Natural killer cell (primary cell): ENCODE measurements at regions of chr7 and their contacts with region 1.

Region 1: DNA sequence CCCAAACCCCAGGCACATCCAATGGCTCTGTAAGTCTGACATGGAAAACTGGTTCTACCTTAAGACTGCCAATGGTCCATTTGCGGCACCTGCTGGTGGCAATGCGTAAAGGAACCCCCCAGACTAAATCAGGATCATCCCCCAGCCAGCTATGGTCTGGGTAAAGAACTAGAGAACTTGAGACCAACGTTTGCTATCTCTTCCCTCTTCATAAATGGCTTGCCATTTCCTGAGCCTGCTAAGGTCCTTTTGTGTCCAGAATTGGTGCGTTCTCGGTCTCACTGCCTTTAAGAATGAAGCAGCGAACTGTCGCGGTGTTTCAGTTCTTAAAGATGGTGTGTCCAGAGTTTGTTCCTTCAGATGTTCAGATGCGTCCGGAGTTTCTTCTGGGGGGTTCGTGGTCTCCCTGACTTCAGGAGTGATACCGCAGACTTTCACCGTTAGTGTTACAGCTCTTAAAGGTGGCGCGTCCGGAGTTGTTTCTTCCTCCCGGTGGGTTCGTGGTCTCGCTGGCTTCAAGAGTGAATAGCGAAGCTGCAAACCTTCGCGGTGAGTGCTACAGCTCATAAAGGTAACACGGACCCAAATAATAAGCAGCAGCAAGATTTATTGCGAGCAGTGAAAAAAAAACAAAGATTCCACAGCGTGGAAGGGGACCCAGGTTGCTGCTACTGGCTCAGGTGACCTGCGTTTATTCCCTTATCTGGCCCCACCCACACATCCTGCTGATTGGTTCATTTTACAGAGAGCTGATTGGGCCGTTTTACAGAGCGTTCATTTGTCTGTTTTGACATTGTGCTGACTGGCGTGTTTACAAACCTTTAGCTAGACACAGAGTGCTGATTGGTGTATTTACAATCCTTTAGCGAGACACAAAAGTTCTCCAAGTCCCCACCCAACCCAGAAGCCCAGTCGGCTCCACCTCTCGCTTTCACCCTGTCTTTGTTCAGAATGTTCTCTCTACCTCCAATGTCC is 95.4 kb downstream of the ELMO1 start:
- DNase-seq: peak; percentile 41 to 88
- ATAC-seq: peak; percentile 80 to 83 (median 80)
- H3K4me3 ChIP-seq: peak overlapping the region; percentile 53
- H3K4me3 Mint-ChIP-seq: peak overlapping the region; percentile 89
- H3K27ac ChIP-seq: peak overlapping the region; percentile 47
- H3K27ac Mint-ChIP-seq: peak overlapping the region; percentile 58 to 80
- H3K4me1 ChIP-seq: peaks cover 27% of the 10 kb centered on the region
- H3K4me1 Mint-ChIP-seq: peaks cover 59 to 78% of the 10 kb centered on the region in 2 donors
- H3K27me3 ChIP-seq: no peaks in the 10 kb centered on the region
- H3K27me3 Mint-ChIP-seq: peaks cover 17 to 46% of the 10 kb centered on the region in 2 donors
- CTCF ChIP-seq: peak; percentile 65

Region 2: GRCh38 chr7:37208528-37208927 is 144.7 kb before region 1 on chr7:
- intact Hi-C with region 1: loop called (anchors 2 kb)
- DNase-seq: peak in 1 of 2 donors; percentile 59
- ATAC-seq: peak; percentile 57 to 77 (median 59)
- H3K4me3 ChIP-seq: no peak overlapping the region
- H3K4me3 Mint-ChIP-seq: no peak overlapping the region
- H3K27ac ChIP-seq: no peak overlapping the region
- H3K27ac Mint-ChIP-seq: peak overlapping the region; percentile 33 to 46
- H3K4me1 ChIP-seq: no peaks in the 10 kb centered on the region
- H3K4me1 Mint-ChIP-seq: peaks cover 5 to 8% of the 10 kb centered on the region in 2 donors
- H3K27me3 ChIP-seq: no peaks in the 10 kb centered on the region
- H3K27me3 Mint-ChIP-seq: no peaks in the 10 kb centered on the region
- CTCF ChIP-seq: peak; percentile 52

Region 3: DNA sequence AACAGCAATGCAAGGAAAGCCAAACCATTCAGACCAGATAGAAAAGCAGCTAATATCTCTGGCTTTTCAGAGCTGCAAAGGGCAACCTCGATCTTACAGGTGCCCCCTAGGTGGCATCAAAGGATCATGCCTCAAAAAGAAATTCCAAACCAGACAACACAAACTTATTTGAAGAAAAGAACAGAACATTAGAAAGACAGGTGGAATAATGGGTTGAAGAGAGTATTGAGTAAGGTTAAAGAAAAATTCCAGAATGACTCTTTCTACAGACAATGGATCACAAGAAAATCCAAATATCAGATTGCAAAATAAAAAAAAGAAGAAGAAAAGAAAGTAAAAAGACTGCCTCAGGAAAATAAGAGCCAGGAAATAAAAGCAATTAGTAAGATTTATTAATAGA is 118.3 kb before region 1 on chr7:
- intact Hi-C with region 1: loop called (anchors 10 kb)
- DNase-seq: peak in 1 of 2 donors; percentile 64
- ATAC-seq: no peak
- H3K4me3 ChIP-seq: no peak overlapping the region
- H3K4me3 Mint-ChIP-seq: no peak overlapping the region
- H3K27ac ChIP-seq: no peak overlapping the region
- H3K27ac Mint-ChIP-seq: no peak overlapping the region
- H3K4me1 ChIP-seq: no peaks in the 10 kb centered on the region
- H3K4me1 Mint-ChIP-seq: peaks cover 5 to 10% of the 10 kb centered on the region in 2 donors
- H3K27me3 ChIP-seq: no peaks in the 10 kb centered on the region
- H3K27me3 Mint-ChIP-seq: no peaks in the 10 kb centered on the region
- CTCF ChIP-seq: peak; percentile 53

Region 4: GRCh38 chr7:37448636-37449361 is 95.5 kb after region 1 on chr7 and contains the start of gene ELMO1:
- intact Hi-C with region 1: loop called (anchors 5 kb)
- DNase-seq: peak; percentile 72 to 90
- ATAC-seq: peak; percentile 73 to 87 (median 82)
- H3K4me3 ChIP-seq: peak within 1 kb of the TSS; percentile 97
- H3K4me3 Mint-ChIP-seq: peak within 1 kb of the TSS; percentile 100
- H3K27ac ChIP-seq: peak within 1 kb of the TSS; percentile 85
- H3K27ac Mint-ChIP-seq: peak within 1 kb of the TSS; percentile 95 to 100
- H3K4me1 ChIP-seq: peaks cover 22% of the 10 kb centered on the region
- H3K4me1 Mint-ChIP-seq: peaks cover 65 to 70% of the 10 kb centered on the region in 2 donors
- H3K27me3 ChIP-seq: no peaks in the 10 kb centered on the region
- H3K27me3 Mint-ChIP-seq: peaks cover 7 to 10% of the 10 kb centered on the region in 2 donors
- CTCF ChIP-seq: peak; percentile 55
- total RNA-seq, gene ELMO1: 127 to 147 (median 130) TPM

Region 5: GRCh38 chr7:37495574-37496184 is 142.4 kb after region 1 on chr7:
- intact Hi-C with region 1: loop called (anchors 10 kb)
- DNase-seq: peak in 1 of 2 donors; percentile 60
- ATAC-seq: peak in 2 of 3 donors; percentile 40 to 51
- H3K4me3 ChIP-seq: no peak overlapping the region
- H3K4me3 Mint-ChIP-seq: no peak overlapping the region
- H3K27ac ChIP-seq: no peak overlapping the region
- H3K27ac Mint-ChIP-seq: no peak overlapping the region
- H3K4me1 ChIP-seq: no peaks in the 10 kb centered on the region
- H3K4me1 Mint-ChIP-seq: no peaks in the 10 kb centered on the region
- H3K27me3 ChIP-seq: no peaks in the 10 kb centered on the region
- H3K27me3 Mint-ChIP-seq: no peaks in the 10 kb centered on the region
- CTCF ChIP-seq: peak; percentile 94